Cardiac septum (tissue), 1 donor: ENCODE measurements at regions of chr7 and their contacts with region 1.

Region 1: DNA sequence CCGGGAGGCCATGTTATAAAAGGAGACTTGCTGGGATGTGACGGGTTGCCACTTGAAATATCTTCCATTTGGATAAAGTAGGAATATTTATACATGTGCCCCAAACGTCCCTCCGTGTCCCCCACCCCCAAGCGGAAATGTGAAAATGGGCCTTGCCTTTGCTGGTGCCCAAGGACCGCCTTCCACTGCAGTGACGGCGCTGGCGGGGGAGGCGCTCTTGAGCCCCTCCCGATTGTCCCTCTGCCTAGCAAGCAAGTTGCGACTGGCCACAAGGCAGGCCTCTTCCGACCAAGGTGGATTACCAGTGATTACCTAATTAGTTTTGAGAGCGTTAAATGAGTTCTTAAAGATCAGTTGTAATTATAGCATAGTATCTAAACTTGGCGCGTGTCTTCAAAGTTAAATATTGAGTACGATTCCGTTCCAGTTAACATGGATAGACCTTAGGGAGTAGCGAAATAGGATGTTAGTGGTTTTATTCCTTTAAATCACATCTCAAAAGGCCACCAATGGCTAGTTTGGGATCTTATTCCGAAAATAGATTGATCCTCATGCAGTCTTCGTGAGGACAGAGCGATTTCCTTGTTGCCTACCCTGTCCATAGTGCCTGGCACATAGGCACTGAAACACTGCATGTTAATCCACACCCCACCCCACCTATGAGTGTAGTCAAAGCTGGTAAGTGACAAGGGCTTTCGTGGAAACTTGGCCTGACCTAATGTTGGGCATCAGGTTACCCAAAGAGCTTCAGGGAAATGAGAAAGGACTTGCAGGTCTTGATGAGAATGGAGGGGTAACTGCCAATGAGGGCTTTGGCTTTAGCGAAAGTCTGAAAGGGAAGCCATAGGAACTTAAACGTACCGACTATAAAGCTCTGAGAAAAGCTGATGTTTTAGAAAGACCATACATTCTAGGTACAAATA is 1.1 kb downstream of the PPIA start:
- DNase-seq: peak; percentile 94

Region 2: DNA sequence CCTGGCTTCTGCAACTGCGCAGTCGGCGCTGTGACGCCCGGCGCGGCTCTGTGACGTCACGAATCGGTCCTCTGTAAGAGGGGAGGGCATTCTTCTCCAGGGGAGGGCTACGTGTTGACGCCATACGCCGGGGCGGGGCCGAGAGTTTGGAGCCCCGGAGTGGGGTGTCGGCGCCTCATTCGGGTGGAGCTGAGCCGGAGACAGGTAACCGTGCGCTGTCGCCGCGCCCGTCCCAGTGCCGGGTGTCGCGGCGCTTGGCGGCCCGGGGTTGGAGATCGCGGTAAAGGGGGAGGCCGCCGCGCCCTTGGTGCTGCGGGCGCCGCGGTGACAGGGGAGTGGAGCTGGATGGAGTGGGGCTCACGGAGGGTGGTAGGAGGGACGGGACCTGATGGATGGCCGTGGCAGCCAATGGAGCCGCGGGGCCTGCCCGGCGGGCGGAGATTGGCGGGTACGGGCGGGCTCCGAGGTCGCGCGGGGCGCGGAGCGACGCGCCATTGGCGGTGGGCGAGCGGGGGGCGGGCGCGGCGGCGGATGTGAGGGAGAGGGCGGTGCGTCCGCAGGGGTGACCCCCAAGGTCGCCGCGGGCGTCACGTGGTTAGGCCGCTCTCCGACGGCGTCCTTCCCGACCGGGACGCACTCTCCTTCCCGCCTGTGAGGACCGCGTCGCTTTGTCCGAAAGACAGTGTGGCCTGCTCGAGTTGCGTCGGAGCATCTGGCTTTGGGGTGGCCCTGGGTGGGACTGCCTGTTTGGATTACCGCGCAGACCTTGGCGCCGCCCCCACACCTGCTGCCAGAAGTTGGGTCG is 190.9 kb before region 1 on chr7 and contains the start of gene OGDH:
- intact Hi-C with region 1: loop called (anchors 5 kb)
- DNase-seq: peak; percentile 100
- total RNA-seq, gene OGDH: 406 TPM

Region 3: GRCh38 chr7:44748045-44748947 is 49.3 kb before region 1 on chr7 and contains the start of gene ZMIZ2:
- intact Hi-C with region 1: loop called (anchors 5 kb)
- DNase-seq: peak; percentile 99
- total RNA-seq, gene ZMIZ2: 62.4 TPM

Region 4: GRCh38 chr7:44761207-44762161 is 36.1 kb before region 1 on chr7:
- intact Hi-C with region 1: loop called (anchors 5 kb)
- DNase-seq: peak; percentile 84

Region 5: GRCh38 chr7:44814919-44815318 is 17.3 kb after region 1 on chr7:
- intact Hi-C with region 1: no loop called
- DNase-seq: peak; percentile 0